ENCODE measurements at regions of chr20 and their contacts with region 1.

Region 1: DNA sequence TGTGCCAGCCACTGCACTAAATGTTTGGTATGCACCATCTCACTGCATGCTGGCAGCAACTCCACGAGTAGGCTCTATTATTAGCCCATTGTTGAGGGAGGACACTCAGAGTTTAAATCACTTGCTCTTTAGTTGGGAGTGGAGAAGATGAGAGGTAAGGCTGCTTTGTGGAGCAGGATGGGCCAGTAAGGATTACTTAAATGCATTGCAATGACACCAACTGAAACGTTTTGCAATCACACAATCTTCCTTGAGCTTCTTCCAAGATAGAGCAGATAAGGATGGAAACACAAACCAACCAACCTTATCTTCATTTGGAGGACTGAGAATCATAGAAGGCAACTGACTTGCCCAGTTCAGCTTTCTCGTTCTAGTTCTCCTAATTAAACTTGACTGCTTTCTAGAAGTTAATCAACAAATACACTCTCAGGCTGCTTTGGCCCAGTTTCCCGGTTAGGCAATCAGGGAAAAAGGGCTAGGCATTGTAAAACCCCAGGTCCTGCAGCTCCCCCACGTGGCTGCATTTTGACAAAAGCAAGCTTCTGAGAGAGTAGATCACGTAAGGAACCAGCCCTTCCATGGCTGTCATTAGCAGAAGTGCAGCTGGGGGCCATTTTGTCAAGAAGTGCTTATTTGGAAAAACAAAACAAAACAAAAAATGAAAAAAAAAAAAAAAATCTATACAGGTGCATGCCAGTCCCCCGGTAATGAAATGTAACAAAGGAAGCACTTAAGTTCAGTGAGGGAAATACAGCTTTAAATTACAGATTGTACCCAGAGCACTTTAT is 130.6 kb downstream of the BCAS1 start:
- DNase-seq: peak; percentile 15 to 91 (median 82)
- H3K4me3 ChIP-seq: peak overlapping the region in 49 of 59 donors; percentile 1 to 60 (median 34)
- H3K27ac ChIP-seq: peak overlapping the region in 56 of 59 donors; percentile 37 to 86 (median 70)
- H3K27me3 ChIP-seq: no peaks in the 10 kb centered on the region
- CTCF ChIP-seq: peak; percentile 40 to 84 (median 72)

Region 2: DNA sequence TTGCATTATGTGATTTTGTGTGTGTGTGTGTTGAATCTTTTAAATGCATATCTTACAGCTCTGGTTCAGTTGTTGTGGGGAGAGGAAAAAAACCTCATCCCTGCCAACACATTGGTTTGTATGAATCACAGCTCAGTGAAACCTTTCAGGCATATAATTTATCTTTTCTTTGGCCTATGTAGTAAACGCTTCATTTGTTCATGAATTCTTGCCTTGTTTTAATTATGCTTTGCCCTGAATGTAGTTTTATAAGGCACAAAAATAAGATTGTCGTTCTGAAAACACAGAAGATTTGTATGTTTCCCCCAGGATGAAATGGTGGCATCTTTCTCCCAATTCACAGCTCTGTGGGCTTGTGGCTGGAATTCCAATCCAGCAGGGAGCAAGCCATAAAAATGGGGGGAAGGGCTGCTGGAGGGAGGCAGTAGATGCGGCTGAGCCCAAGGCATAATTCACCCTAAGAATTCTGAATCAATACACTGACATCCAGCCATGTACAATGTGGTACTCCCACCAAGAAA is 85.5 kb after region 1 on chr20:
- intact Hi-C with region 1: loop called (anchors 5 to 10 kb)
- DNase-seq: no peak
- H3K4me3 ChIP-seq: peak overlapping the region in 53 of 59 donors; percentile 2 to 80 (median 58)
- H3K27ac ChIP-seq: peak overlapping the region in 48 of 59 donors; percentile 1 to 98 (median 92)
- H3K27me3 ChIP-seq: no peaks in the 10 kb centered on the region
- CTCF ChIP-seq: no peak

Region 3: DNA sequence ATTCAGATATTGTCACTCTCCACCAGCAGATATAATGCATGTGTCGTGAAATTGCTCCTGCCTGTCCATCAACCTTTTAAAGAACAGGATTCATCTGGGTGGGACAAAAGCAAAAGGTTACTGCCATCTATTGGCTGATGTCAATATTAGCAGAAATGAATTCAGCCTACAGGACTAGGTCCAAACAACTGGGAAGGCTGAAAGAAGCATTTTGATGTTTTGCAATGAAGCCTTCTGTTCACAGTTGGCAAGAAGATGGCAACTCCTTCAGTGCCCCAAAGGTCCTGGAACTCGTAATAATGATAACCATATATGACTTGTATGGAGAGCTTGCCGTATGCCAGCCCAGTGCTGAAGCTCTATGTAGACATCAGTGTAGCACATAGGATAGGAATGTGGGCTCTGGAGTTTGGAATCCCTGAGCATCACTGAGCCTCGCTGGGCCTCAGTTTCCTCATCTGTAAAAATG is 123.1 kb after region 1 on chr20:
- intact Hi-C with region 1: loop called in 1 of 2 experiments (anchors 2 kb)
- DNase-seq: no peak
- H3K4me3 ChIP-seq: no peak overlapping the region
- H3K27ac ChIP-seq: peak overlapping the region in 1 of 59 donors; percentile 36
- H3K27me3 ChIP-seq: peaks cover 0 to 4% (median 0%) of the 10 kb centered on the region in 45 donors
- CTCF ChIP-seq: peak; percentile 29 to 86 (median 75)

Measured in dorsolateral prefrontal cortex (tissue), 120 donors.